Dendritic cell treated with granulocyte-macrophage colony-stimulating factor and Interleukin-4, amounts not matched to agents 40 ng/mL and 50 ng/mL, for 4 days (primary cell): ENCODE measurements at regions of chr19 and their contacts with region 1.

Region 1: GRCh38 chr19:15264061-15264932 is 32.0 kb upstream of the EPHX3 start:
- H3K4me3 Mint-ChIP-seq: no peak overlapping the region
- H3K27ac Mint-ChIP-seq: no peak overlapping the region
- H3K4me1 Mint-ChIP-seq: no peaks in the 10 kb centered on the region
- H3K27me3 Mint-ChIP-seq: no peaks in the 10 kb centered on the region

Region 2: GRCh38 chr19:15555759-15556633 is 291.7 kb after region 1 on chr19:
- intact Hi-C with region 1: loop called (anchors 1 kb)
- H3K4me3 Mint-ChIP-seq: peak overlapping the region; percentile 75
- H3K27ac Mint-ChIP-seq: peak overlapping the region; percentile 41
- H3K4me1 Mint-ChIP-seq: peaks cover 18% of the 10 kb centered on the region
- H3K27me3 Mint-ChIP-seq: peaks cover 45% of the 10 kb centered on the region